Activated CD4-positive, alpha-beta T cell treated with anti-CD3 and anti-CD28 coated beads, Interleukin-2, amount 10 ng/mL, durations not matched to agents 7 days and 5 days (primary cell): ENCODE measurements at regions of chr2 and their contacts with region 1.

Region 1: GRCh38 chr2:20650880-20651730 is at the start of gene HS1BP3:
- DNase-seq: peak; percentile 85
- H3K4me3 Mint-ChIP-seq: peak within 1 kb of the TSS; percentile 88
- H3K27ac Mint-ChIP-seq: peak within 1 kb of the TSS; percentile 95
- H3K4me1 Mint-ChIP-seq: peaks cover 30% of the 10 kb centered on the region
- H3K27me3 Mint-ChIP-seq: peaks cover 6% of the 10 kb centered on the region
- total RNA-seq, gene HS1BP3: 14.1 to 14.4 TPM

Region 2: GRCh38 chr2:20411361-20411894 is 239.7 kb before region 1 on chr2:
- CTCF ChIA-PET with region 1: interaction called, 19 read pairs
- POLR2A ChIA-PET with region 1: no interaction called
- DNase-seq: peak; percentile 77
- H3K4me3 Mint-ChIP-seq: no peak overlapping the region
- H3K27ac Mint-ChIP-seq: no peak overlapping the region
- H3K4me1 Mint-ChIP-seq: peaks cover 1% of the 10 kb centered on the region
- H3K27me3 Mint-ChIP-seq: peaks cover 36% of the 10 kb centered on the region

Region 3: DNA sequence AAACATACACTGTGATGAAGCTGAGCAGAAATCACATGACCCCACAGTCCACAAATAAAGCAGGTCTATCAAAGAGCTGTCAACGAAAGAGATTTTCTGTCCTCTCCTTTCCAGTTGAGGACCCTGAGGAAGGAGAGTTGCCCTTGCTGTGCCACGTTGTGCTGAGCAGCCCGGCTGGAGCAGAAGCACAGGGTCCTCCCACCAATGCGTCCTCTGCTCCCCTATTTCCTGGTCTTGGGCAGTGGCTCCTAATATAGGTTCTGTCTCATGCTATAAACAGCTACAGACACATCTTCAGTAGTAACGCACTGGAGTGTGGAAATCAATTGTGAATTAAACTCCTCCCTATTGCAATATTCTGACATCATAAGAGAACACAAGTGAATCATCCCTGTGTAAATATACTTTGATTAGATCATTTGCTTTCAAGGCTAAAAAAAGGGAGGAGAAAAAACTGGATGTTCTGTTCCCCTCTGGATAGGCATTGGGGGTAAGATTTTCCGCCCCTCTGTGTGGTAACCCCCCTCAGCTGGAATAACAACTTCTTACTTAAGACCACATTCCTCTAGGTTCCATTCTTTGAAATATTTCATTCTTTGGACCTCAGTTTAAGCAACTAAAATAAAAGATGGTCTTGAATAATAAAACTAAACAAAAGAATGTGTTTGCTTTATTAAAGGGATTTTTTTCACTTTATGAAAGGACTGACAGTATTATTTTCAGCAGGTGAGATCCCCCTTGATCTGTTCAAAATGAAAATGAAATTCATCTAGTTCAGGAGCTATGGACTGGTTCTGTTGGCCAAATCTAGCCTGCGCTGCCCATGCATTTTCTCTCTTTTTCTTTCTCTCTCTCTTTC is 212.5 kb before region 1 on chr2:
- CTCF ChIA-PET with region 1: interaction called, 18 read pairs
- POLR2A ChIA-PET with region 1: no interaction called
- DNase-seq: no peak
- H3K4me3 Mint-ChIP-seq: no peak overlapping the region
- H3K27ac Mint-ChIP-seq: no peak overlapping the region
- H3K4me1 Mint-ChIP-seq: no peaks in the 10 kb centered on the region
- H3K27me3 Mint-ChIP-seq: peaks cover 41% of the 10 kb centered on the region

Region 4: GRCh38 chr2:20446917-20447436 is 204.1 kb before region 1 on chr2 and contains the start of gene RHOB:
- CTCF ChIA-PET with region 1: interaction called, 21 read pairs
- POLR2A ChIA-PET with region 1: no interaction called
- DNase-seq: peak; percentile 88
- H3K4me3 Mint-ChIP-seq: peak within 1 kb of the TSS; percentile 68
- H3K27ac Mint-ChIP-seq: no peak within 1 kb of the TSS
- H3K4me1 Mint-ChIP-seq: peaks cover 7% of the 10 kb centered on the region
- H3K27me3 Mint-ChIP-seq: peaks cover 53% of the 10 kb centered on the region
- total RNA-seq, gene RHOB: 0.52 to 0.67 TPM

Region 5: GRCh38 chr2:20633794-20634506 is 17.2 kb before region 1 on chr2:
- CTCF ChIA-PET with region 1: interaction called, 13 read pairs
- POLR2A ChIA-PET with region 1: no interaction called
- DNase-seq: no peak
- H3K4me3 Mint-ChIP-seq: no peak overlapping the region
- H3K27ac Mint-ChIP-seq: no peak overlapping the region
- H3K4me1 Mint-ChIP-seq: no peaks in the 10 kb centered on the region
- H3K27me3 Mint-ChIP-seq: no peaks in the 10 kb centered on the region

Region 6: GRCh38 chr2:20661067-20661980 is 10.2 kb after region 1 on chr2:
- CTCF ChIA-PET with region 1: interaction called, 36 read pairs
- POLR2A ChIA-PET with region 1: interaction called, 5 read pairs
- DNase-seq: peak; percentile 73
- H3K4me3 Mint-ChIP-seq: no peak overlapping the region
- H3K27ac Mint-ChIP-seq: no peak overlapping the region
- H3K4me1 Mint-ChIP-seq: peaks cover 7% of the 10 kb centered on the region
- H3K27me3 Mint-ChIP-seq: peaks cover 75% of the 10 kb centered on the region